Endothelial cell of umbilical vein (primary cell): ENCODE measurements at regions of chr7 and their contacts with region 1.

Region 1: GRCh38 chr7:116726713-116727431 is 54.9 kb downstream of the MET start:
- DNase-seq: no peak
- H3K4me3 ChIP-seq: no peak overlapping the region
- H3K27ac ChIP-seq: no peak overlapping the region
- H3K4me1 ChIP-seq: peaks cover 17% of the 10 kb centered on the region
- H3K27me3 ChIP-seq: no peaks in the 10 kb centered on the region
- CTCF ChIP-seq: no peak
- POLR2A ChIP-seq: no peak

Region 2: DNA sequence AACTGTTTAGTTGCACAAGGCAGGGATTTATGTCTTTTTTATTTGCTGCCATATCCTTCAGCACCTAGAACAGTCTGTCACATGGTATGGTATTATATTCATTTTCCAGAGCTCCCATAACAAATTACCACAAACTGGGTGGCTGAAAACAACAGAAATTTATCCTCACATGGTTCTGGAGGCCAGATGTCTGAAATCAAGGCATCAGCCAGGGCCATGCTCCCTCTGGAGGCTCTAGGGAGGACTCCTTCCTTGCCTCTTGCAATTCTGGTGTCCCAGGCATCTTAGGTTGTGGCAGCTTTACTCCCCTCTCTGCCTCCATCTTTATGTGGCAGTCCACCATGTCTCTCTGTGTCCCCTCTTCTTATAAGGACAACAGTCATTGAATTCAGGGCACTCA is 11.8 kb before region 1 on chr7:
- CTCF ChIA-PET with region 1: interaction called, 18 read pairs
- POLR2A ChIA-PET with region 1: no interaction called
- dilution Hi-C with region 1: no loop called
- intact Hi-C with region 1: no loop called
- DNase-seq: no peak
- H3K4me3 ChIP-seq: no peak overlapping the region
- H3K27ac ChIP-seq: no peak overlapping the region
- H3K4me1 ChIP-seq: peaks cover 12% of the 10 kb centered on the region
- H3K27me3 ChIP-seq: no peaks in the 10 kb centered on the region
- CTCF ChIP-seq: peak in 1 of 2 donors; percentile 5
- POLR2A ChIP-seq: no peak

Region 3: GRCh38 chr7:116911801-116912200 is 184.9 kb after region 1 on chr7:
- CTCF ChIA-PET with region 1: no interaction called
- POLR2A ChIA-PET with region 1: no interaction called
- dilution Hi-C with region 1: no loop called
- intact Hi-C with region 1: no loop called
- DNase-seq: no peak
- H3K4me3 ChIP-seq: no peak overlapping the region
- H3K27ac ChIP-seq: no peak overlapping the region
- H3K4me1 ChIP-seq: no peaks in the 10 kb centered on the region
- H3K27me3 ChIP-seq: no peaks in the 10 kb centered on the region
- CTCF ChIP-seq: no peak
- POLR2A ChIP-seq: no peak

Region 4: GRCh38 chr7:116970238-116970910 is 243.5 kb after region 1 on chr7:
- CTCF ChIA-PET with region 1: no interaction called
- POLR2A ChIA-PET with region 1: no interaction called
- dilution Hi-C with region 1: no loop called
- intact Hi-C with region 1: no loop called
- DNase-seq: no peak
- H3K4me3 ChIP-seq: no peak overlapping the region
- H3K27ac ChIP-seq: no peak overlapping the region
- H3K4me1 ChIP-seq: no peaks in the 10 kb centered on the region
- H3K27me3 ChIP-seq: no peaks in the 10 kb centered on the region
- CTCF ChIP-seq: no peak
- POLR2A ChIP-seq: no peak